MCF 10A (cell line): ENCODE measurements at regions of chr18 and their contacts with region 1.

Region 1: GRCh38 chr18:22465859-22466457 is 48.2 kb upstream of the CTAGE1 start:
- DNase-seq: peak; percentile 96
- H3K4me3 Mint-ChIP-seq: peak overlapping the region; percentile 60
- H3K27ac Mint-ChIP-seq: peak overlapping the region; percentile 98
- H3K4me1 Mint-ChIP-seq: peaks cover 27% of the 10 kb centered on the region
- H3K27me3 Mint-ChIP-seq: no peaks in the 10 kb centered on the region
- CTCF ChIP-seq: no peak

Region 2: DNA sequence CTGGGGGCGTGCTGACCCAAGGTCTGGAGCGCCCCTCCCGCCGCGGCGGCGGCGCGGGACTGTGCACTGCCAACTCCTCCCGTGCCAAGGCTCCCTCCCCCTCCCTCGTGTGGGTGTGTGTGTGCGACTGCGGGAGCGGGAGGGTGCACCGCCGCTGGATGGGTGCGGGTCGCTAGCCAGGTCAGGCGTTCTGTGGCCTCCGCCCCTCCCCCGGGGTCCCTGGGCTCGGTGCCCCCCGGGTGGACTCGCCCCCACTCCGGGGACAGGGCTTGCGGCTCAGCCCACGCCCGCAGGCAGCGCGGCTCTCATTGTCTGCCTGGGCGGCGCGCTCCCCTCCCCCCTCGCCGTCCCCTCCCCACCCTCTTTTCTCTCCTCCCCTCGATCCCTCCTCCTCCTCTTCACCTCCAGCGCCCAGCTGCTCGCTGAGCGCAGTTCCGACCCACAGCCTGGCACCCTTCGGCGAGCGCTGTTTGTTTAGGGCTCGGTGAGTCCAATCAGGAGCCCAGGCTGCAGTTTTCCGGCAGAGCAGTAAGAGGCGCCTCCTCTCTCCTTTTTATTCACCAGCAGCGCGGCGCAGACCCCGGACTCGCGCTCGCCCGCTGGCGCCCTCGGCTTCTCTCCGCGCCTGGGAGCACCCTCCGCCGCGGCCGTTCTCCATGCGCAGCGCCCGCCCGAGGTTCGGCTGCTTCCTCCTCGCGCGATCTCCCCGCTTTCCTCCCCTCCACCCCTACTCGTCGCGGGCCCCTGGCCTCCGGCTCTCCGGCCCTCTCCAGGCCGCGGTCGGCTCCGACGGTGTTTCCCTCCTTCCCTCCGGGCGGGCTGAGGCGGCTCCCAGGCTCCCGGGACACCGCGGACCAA is 296.7 kb before region 1 on chr18 and contains the start of gene GATA6:
- CTCF ChIA-PET with region 1: no interaction called
- POLR2A ChIA-PET with region 1: interaction called, 4 read pairs
- intact Hi-C with region 1: loop called (anchors 1 kb)
- DNase-seq: peak; percentile 89
- H3K4me3 Mint-ChIP-seq: peak within 1 kb of the TSS; percentile 97
- H3K27ac Mint-ChIP-seq: peak within 1 kb of the TSS; percentile 78
- H3K4me1 Mint-ChIP-seq: peaks cover 6% of the 10 kb centered on the region
- H3K27me3 Mint-ChIP-seq: no peaks in the 10 kb centered on the region
- CTCF ChIP-seq: peak; percentile 25
- total RNA-seq, gene GATA6: 6.7 and 14.0 TPM in 2 replicates

Region 3: DNA sequence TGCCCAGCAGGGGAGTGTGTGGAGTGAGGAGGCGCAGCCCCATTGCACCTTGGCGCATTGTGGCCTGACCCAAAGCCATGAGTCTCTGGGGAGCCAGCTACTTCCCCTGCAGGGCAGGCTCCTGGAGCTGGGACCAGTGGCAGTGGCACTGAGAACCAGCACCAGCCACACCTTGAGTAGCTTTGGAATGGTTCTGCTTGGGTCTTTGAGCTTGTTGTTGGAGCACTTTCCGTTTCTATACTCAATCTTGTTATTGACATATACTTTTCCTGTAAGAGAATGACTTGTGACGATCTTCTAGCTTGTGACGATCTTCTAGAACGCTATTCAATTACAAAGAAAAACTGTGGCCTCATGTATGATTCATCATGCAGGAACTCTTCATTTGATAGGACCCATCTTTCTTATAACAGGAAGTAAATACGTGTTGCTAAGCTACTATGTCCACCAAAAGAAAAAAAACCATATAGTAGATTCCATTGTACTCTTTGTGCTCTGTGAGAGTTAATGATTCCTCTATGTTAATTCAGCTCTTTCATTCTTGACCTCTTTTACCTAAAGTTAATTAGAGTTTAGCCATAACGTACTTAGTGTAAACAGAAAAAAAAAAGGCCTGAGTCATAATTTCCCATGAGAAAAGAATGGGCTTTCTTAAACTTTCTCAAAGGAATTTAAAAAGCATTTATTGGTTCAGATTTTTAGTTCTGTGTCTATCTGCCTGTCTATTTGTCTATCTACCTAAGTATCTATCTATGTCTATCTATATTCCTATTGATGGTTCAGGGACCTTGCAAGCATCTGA is 183.4 kb before region 1 on chr18:
- CTCF ChIA-PET with region 1: interaction called, 3 read pairs
- POLR2A ChIA-PET with region 1: interaction called, 3 read pairs
- intact Hi-C with region 1: loop called (anchors 5 kb)
- DNase-seq: peak; percentile 71
- H3K4me3 Mint-ChIP-seq: no peak overlapping the region
- H3K27ac Mint-ChIP-seq: peak overlapping the region; percentile 84
- H3K4me1 Mint-ChIP-seq: peaks cover 39% of the 10 kb centered on the region
- H3K27me3 Mint-ChIP-seq: no peaks in the 10 kb centered on the region
- CTCF ChIP-seq: no peak

Region 4: DNA sequence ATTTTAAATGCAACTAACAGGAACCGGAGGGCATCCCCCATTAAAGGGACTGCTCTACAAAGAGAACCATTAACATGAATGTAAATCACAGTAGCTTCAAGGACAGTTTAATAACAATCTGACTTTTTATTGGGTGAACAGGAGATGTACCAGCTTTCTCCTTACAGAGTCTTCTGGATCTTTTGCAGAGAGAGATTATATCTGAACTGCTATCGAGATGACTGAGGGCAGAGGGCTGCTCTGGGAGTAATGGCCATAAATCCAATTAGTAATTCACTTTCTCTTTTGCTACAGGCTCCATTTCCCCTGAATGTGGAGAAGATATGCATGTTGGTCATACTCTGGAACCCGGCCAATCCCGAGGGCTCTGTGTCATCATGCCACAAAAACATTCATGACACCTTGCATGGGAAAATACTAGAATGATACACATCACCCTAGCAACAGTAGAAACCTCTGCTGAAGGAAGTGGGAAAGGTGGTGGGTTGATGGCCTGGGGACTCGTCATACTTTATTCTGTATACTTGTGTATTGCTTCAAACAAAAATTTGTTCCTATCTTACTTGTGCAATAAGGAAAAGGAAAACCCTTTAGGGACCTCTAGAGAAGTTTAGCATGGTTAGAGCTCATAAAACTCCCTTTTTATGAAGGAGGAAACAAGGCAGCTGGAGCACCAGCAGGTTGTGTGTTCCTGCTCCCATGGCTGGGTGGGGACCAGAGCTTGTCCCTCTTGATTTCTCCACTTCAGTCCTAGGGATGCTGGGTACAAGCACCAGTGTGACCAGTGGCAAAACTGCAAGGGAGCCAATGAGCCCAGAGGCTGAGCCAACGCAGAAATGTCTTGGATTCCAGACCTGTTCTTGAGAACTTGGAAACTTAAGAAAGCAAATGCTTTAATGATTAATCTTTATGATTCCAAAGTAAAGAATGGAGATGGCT is 74.3 kb before region 1 on chr18:
- CTCF ChIA-PET with region 1: no interaction called
- POLR2A ChIA-PET with region 1: no interaction called
- intact Hi-C with region 1: loop called (anchors 1 kb)
- DNase-seq: peak; percentile 90
- H3K4me3 Mint-ChIP-seq: no peak overlapping the region
- H3K27ac Mint-ChIP-seq: peak overlapping the region; percentile 25
- H3K4me1 Mint-ChIP-seq: peaks cover 11% of the 10 kb centered on the region
- H3K27me3 Mint-ChIP-seq: no peaks in the 10 kb centered on the region
- CTCF ChIP-seq: no peak

Region 5: GRCh38 chr18:22432672-22433137 is 33.3 kb before region 1 on chr18:
- CTCF ChIA-PET with region 1: no interaction called
- POLR2A ChIA-PET with region 1: interaction called, 14 read pairs
- intact Hi-C with region 1: no loop called
- DNase-seq: peak; percentile 94
- H3K4me3 Mint-ChIP-seq: peak overlapping the region; percentile 46
- H3K27ac Mint-ChIP-seq: peak overlapping the region; percentile 84
- H3K4me1 Mint-ChIP-seq: peaks cover 19% of the 10 kb centered on the region
- H3K27me3 Mint-ChIP-seq: no peaks in the 10 kb centered on the region
- CTCF ChIP-seq: no peak

Region 6: DNA sequence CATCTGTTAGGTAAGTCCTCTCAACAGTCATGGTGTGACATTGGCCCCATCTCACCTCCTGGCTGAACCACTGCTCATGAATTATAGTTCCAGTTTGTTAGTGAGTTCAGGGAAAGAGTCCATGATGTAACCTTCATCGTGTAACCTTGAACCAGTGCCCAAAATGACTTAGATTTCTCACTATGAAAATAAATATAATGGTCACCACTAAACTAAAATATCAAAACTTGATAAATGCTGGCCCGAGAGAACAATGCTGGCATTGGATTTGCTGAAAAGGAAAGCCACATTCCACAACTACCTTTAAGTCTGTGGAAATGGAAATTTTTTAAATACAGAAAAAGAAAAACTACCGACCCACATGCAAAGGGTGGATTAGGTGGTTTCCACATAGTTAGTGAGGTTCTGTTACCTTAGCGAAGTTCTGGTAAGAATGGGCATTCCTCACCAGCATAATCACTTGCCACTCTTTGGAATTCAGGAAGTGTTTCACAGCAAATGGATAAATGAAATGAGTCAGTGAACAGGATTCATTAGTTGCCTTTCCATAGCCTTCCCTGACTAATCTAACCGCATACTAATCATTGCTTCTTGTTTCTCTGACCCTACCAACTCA is 85.7 kb after region 1 on chr18:
- CTCF ChIA-PET with region 1: no interaction called
- POLR2A ChIA-PET with region 1: interaction called, 3 read pairs
- intact Hi-C with region 1: loop called (anchors 1 kb)
- DNase-seq: peak; percentile 90
- H3K4me3 Mint-ChIP-seq: no peak overlapping the region
- H3K27ac Mint-ChIP-seq: no peak overlapping the region
- H3K4me1 Mint-ChIP-seq: peaks cover 2% of the 10 kb centered on the region
- H3K27me3 Mint-ChIP-seq: no peaks in the 10 kb centered on the region
- CTCF ChIP-seq: no peak

Region 7: DNA sequence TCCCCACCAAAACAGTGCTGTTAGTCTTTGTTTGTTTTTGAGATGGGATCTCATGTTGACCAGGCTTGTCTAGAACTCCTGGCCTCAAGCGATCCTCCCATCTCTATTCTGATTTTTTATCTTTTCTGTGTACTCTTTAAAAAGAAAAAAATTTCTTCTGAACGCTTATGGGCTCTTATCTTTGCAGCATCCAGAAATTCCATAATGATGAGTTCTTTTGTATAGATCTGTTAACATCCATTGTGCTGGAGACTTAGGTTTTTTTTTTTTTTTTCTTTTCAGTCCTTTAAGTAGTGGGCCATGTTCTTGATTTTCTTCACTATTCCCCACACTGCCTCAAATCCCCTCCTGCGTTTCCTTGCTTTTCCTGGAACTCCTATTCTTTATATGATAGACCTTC is 498.2 kb after region 1 on chr18:
- CTCF ChIA-PET with region 1: no interaction called
- POLR2A ChIA-PET with region 1: no interaction called
- intact Hi-C with region 1: no loop called
- DNase-seq: no peak
- H3K4me3 Mint-ChIP-seq: no peak overlapping the region
- H3K27ac Mint-ChIP-seq: peak overlapping the region; percentile 53
- H3K4me1 Mint-ChIP-seq: peaks cover 22% of the 10 kb centered on the region
- H3K27me3 Mint-ChIP-seq: no peaks in the 10 kb centered on the region
- CTCF ChIP-seq: no peak